SK-N-SH (cell line): ENCODE measurements at regions of chr2 and their contacts with region 1.

Region 1: DNA sequence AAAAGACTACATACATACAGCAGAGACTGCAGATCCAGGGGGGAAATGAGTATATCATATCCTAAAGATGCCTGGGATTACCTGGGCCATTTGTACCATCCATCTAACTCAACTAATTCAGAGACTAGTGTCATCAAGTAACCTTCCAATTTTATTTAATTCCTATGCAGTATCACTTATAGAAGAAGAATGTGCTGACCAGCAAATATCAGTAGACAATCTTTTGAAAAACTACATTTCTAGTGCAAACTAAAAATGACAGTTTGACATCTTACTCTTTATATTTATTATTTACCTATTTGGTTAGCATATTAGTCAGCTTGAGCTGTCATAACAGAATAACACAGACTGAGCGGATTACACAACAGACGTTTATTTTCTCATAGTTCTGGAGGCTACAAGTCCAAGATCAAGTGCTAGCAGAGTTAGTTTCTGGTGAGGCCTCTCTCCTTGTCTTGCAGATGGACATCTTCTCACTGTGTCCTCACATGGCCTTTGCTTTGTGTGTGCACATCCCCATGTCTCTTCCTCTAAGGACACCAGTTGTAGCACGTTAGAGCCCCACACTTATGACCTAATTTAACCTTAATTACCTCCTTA is 47.0 kb downstream of the NCKAP5 start:
- DNase-seq: no peak
- H3K4me3 ChIP-seq: no peak overlapping the region
- H3K27ac ChIP-seq: no peak overlapping the region
- H3K4me1 ChIP-seq: peaks cover 0 to 28% of the 10 kb centered on the region in 2 experiments; a peak in 1 of 4 replicates
- H3K27me3 ChIP-seq: no peaks in the 10 kb centered on the region
- CTCF ChIP-seq: no peak
- EP300 ChIP-seq: no peak
- RAD21 ChIP-seq: no peak

Region 2: GRCh38 chr2:133531382-133531781 is 10.1 kb after region 1 on chr2:
- CTCF ChIA-PET with region 1: interaction called, 11 read pairs
- POLR2A ChIA-PET with region 1: no interaction called
- DNase-seq: no peak
- H3K4me3 ChIP-seq: no peak overlapping the region
- H3K27ac ChIP-seq: no peak overlapping the region
- H3K4me1 ChIP-seq: peaks cover 0 to 18% of the 10 kb centered on the region in 2 experiments; a peak in 1 of 4 replicates
- H3K27me3 ChIP-seq: no peaks in the 10 kb centered on the region
- CTCF ChIP-seq: no peak
- EP300 ChIP-seq: no peak
- RAD21 ChIP-seq: no peak